Activated CD4-positive, alpha-beta T cell treated with anti-CD3 and anti-CD28 coated beads for 36 hours (primary cell): ENCODE measurements at regions of chr4 and their contacts with region 1.

Region 1: DNA sequence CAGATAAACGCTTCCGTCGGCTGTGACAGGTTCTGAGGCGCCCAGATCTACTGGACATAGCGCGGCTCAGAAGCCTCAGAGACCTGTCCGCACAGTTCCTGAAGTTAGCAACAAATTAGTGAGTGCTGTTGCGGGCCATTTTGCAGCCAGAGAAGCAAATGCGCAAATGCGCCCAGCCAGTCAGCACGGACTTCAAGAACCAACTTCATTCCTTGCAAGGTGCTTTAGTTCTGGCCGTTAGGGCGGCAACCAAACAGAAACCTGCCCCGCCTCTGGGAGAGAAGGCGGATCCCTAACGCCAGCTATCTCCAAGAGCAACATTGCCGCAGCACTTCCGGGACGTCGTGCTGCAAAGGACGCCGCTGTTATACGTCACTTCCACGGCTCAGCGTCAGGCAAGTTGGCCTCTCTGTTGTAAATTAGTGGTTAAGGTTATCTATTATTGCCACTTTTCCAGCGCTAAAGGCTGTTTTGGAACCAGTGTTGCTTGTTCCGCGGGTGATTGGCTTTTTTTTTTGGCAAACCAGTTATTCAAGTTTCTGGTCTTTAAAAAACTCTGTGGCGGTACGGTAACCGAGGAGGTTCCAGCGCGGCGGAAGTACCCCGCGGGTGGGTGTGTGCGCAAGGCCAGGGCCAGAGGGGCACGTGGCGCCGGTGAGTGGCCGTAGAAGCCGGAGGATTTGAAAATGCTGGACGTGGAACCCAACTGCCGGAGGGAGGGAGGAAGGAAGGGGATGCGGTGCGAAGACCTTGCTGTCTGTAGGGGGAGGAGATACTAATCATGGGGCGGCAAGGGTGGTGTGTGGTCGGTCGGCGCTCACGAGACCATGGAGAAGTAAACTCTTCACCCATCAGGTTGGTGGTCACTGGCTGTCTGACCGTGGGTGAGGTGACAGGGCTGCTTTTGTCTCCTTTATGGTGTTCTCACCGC is at the start of gene GAR1:
- DNase-seq: peak; percentile 94
- ATAC-seq: peak; percentile 92
- H3K4me3 Mint-ChIP-seq: peak within 1 kb of the TSS; percentile 99
- H3K27ac Mint-ChIP-seq: peak within 1 kb of the TSS; percentile 99
- H3K4me1 Mint-ChIP-seq: peaks cover 49% of the 10 kb centered on the region
- H3K27me3 Mint-ChIP-seq: no peaks in the 10 kb centered on the region
- total RNA-seq, gene GAR1: 37.4 to 42.2 TPM

Region 2: DNA sequence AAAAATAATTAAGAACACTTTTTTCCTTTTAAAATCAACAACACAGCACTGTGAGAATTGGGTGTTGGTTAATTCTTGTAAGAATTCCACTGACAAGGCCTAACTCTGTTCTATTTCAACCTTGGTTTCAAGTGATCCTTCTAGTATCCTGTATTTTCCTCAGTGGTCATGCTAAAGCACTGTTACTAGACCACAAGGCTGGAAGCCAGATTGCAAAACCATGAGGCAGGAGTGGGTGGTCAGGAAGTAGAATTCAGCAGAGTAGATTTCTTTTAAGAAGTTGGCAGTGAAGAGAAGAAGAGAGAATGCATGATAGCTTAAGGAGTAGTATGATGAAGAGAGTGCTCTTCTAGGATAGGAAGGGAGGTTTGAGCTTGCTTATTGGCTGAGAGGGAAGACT is 1575.0 kb before region 1 on chr4:
- CTCF ChIA-PET with region 1: no interaction called
- POLR2A ChIA-PET with region 1: no interaction called
- intact Hi-C with region 1: no loop called
- DNase-seq: no peak
- ATAC-seq: no peak
- H3K4me3 Mint-ChIP-seq: no peak overlapping the region
- H3K27ac Mint-ChIP-seq: no peak overlapping the region
- H3K4me1 Mint-ChIP-seq: peaks cover 14% of the 10 kb centered on the region
- H3K27me3 Mint-ChIP-seq: no peaks in the 10 kb centered on the region

Region 3: GRCh38 chr4:108650212-108651013 is 1165.0 kb before region 1 on chr4 and contains the start of gene OSTC:
- CTCF ChIA-PET with region 1: no interaction called
- POLR2A ChIA-PET with region 1: no interaction called
- intact Hi-C with region 1: loop called in 1 of 2 experiments (anchors 1 kb)
- DNase-seq: peak; percentile 95
- ATAC-seq: peak; percentile 96
- H3K4me3 Mint-ChIP-seq: peak within 1 kb of the TSS; percentile 98
- H3K27ac Mint-ChIP-seq: peak within 1 kb of the TSS; percentile 93
- H3K4me1 Mint-ChIP-seq: peaks cover 32% of the 10 kb centered on the region
- H3K27me3 Mint-ChIP-seq: no peaks in the 10 kb centered on the region
- total RNA-seq, gene OSTC: 50.5 to 78.5 TPM

Region 4: GRCh38 chr4:109559983-109560686 is 255.3 kb before region 1 on chr4 and contains the start of gene MCUB:
- CTCF ChIA-PET with region 1: interaction called, 4 read pairs
- POLR2A ChIA-PET with region 1: no interaction called
- intact Hi-C with region 1: loop called (anchors 1 to 2 kb)
- DNase-seq: peak; percentile 96
- ATAC-seq: peak; percentile 89
- H3K4me3 Mint-ChIP-seq: peak within 1 kb of the TSS; percentile 86
- H3K27ac Mint-ChIP-seq: peak within 1 kb of the TSS; percentile 97
- H3K4me1 Mint-ChIP-seq: peaks cover 49% of the 10 kb centered on the region
- H3K27me3 Mint-ChIP-seq: no peaks in the 10 kb centered on the region
- total RNA-seq, gene MCUB: 58.2 to 80.1 TPM

Region 5: GRCh38 chr4:109631532-109632108 is 183.8 kb before region 1 on chr4:
- CTCF ChIA-PET with region 1: no interaction called
- POLR2A ChIA-PET with region 1: no interaction called
- intact Hi-C with region 1: no loop called
- DNase-seq: peak; percentile 28
- ATAC-seq: peak; percentile 77
- H3K4me3 Mint-ChIP-seq: peak overlapping the region; percentile 20
- H3K27ac Mint-ChIP-seq: peak overlapping the region; percentile 72
- H3K4me1 Mint-ChIP-seq: peaks cover 45% of the 10 kb centered on the region
- H3K27me3 Mint-ChIP-seq: no peaks in the 10 kb centered on the region

Region 6: GRCh38 chr4:109702950-109703663 is 112.3 kb before region 1 on chr4 and contains the start of gene CASP6:
- CTCF ChIA-PET with region 1: interaction called, 3 read pairs
- POLR2A ChIA-PET with region 1: no interaction called
- intact Hi-C with region 1: loop called (anchors 1 to 2 kb)
- DNase-seq: peak; percentile 86
- ATAC-seq: peak; percentile 83
- H3K4me3 Mint-ChIP-seq: peak within 1 kb of the TSS; percentile 89
- H3K27ac Mint-ChIP-seq: peak within 1 kb of the TSS; percentile 78
- H3K4me1 Mint-ChIP-seq: peaks cover 35% of the 10 kb centered on the region
- H3K27me3 Mint-ChIP-seq: no peaks in the 10 kb centered on the region
- total RNA-seq, gene CASP6: 23.3 to 26.5 TPM

Region 7: DNA sequence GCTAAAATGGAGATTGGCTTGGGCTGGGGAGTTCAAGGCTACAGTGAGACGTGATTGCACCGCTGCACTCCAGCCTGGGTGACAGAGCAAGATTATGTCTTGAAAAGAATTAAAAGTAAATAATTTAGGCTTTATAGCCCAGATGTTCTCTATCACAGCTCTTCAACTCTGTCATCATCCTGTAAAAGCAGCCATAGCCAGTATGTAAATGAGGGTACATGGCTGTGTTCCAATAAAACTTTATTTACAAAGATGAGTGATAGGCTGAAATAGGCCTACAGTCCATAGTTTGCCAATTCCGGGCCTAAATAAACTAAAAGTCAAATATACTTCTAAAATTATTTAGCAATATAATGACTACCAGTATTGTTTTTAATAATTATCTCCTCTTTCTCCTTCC is 21.6 kb after region 1 on chr4:
- CTCF ChIA-PET with region 1: no interaction called
- POLR2A ChIA-PET with region 1: no interaction called
- intact Hi-C with region 1: no loop called
- DNase-seq: no peak
- ATAC-seq: no peak
- H3K4me3 Mint-ChIP-seq: no peak overlapping the region
- H3K27ac Mint-ChIP-seq: no peak overlapping the region
- H3K4me1 Mint-ChIP-seq: no peaks in the 10 kb centered on the region
- H3K27me3 Mint-ChIP-seq: no peaks in the 10 kb centered on the region

Region 8: GRCh38 chr4:109977854-109978501 is 162.6 kb after region 1 on chr4:
- CTCF ChIA-PET with region 1: interaction called, 3 read pairs
- POLR2A ChIA-PET with region 1: no interaction called
- intact Hi-C with region 1: loop called in 1 of 2 experiments (anchors 5 kb)
- DNase-seq: no peak
- ATAC-seq: no peak
- H3K4me3 Mint-ChIP-seq: no peak overlapping the region
- H3K27ac Mint-ChIP-seq: no peak overlapping the region
- H3K4me1 Mint-ChIP-seq: no peaks in the 10 kb centered on the region
- H3K27me3 Mint-ChIP-seq: peaks cover 12% of the 10 kb centered on the region